ENCODE measurements at regions of chr5 and their contacts with region 1.

Region 1: GRCh38 chr5:170603578-170604565 is 100.1 kb downstream of the KCNIP1 start:
- DNase-seq: peak; percentile 86
- H3K4me3 Mint-ChIP-seq: no peak overlapping the region
- H3K27ac Mint-ChIP-seq: no peak overlapping the region
- H3K4me1 Mint-ChIP-seq: peaks cover 5% of the 10 kb centered on the region
- H3K27me3 Mint-ChIP-seq: peaks cover 51% of the 10 kb centered on the region
- CTCF ChIP-seq: peak; percentile 97

Region 2: GRCh38 chr5:170581211-170581610 is 22.7 kb before region 1 on chr5:
- CTCF ChIA-PET with region 1: no interaction called
- POLR2A ChIA-PET with region 1: no interaction called
- intact Hi-C with region 1: no loop called
- DNase-seq: no peak
- H3K4me3 Mint-ChIP-seq: no peak overlapping the region
- H3K27ac Mint-ChIP-seq: no peak overlapping the region
- H3K4me1 Mint-ChIP-seq: no peaks in the 10 kb centered on the region
- H3K27me3 Mint-ChIP-seq: peaks cover 25% of the 10 kb centered on the region
- CTCF ChIP-seq: no peak

Region 3: DNA sequence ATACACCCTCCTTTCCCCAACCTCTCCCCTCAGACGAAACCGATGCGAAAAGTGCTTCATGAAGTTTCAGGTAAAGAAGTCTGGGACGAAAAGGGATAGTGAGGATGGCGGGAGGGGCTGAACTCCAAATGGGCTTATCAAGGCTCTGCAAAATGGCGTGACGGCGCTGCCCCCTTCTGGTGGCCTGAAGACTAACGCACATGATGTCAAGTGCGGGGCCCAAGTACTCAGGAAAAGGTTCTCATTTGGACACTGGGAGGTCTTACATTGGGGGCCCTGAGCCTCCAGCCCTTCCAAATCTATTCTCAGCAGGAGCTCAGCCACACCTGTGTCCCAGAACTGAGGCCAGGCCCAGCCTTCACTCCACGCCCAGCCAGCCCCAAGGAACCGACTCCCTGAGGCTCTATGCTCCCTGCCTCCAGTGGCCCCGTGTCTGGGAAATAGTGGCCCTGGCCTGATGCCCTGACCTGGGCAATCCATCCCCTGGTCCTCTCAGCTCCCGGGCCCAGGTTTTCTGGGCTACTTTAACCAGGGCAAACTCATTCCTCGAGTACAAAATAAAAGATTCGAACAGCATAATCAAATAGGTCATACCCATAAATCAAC is 19.8 kb after region 1 on chr5:
- CTCF ChIA-PET with region 1: interaction called, 284 read pairs
- POLR2A ChIA-PET with region 1: no interaction called
- intact Hi-C with region 1: loop called (anchors 1 kb)
- DNase-seq: peak; percentile 78
- H3K4me3 Mint-ChIP-seq: no peak overlapping the region
- H3K27ac Mint-ChIP-seq: no peak overlapping the region
- H3K4me1 Mint-ChIP-seq: no peaks in the 10 kb centered on the region
- H3K27me3 Mint-ChIP-seq: peaks cover 27% of the 10 kb centered on the region
- CTCF ChIP-seq: peak; percentile 97